Caco-2 (cell line): ENCODE measurements at regions of chr17 and their contacts with region 1.

Region 1: GRCh38 chr17:40362696-40363110 is 1.8 kb downstream of the GJD3 start:
- DNase-seq: peak; percentile 89 to 94
- H3K4me3 ChIP-seq: peak overlapping the region; percentile 94
- H3K4me3 Mint-ChIP-seq: peak overlapping the region; percentile 69
- H3K27ac Mint-ChIP-seq: peak overlapping the region; percentile 11
- H3K4me1 ChIP-seq: peaks cover 5% of the 10 kb centered on the region; the same call in 1 of the 2 replicates
- H3K4me1 Mint-ChIP-seq: peaks cover 6% of the 10 kb centered on the region
- H3K27me3 ChIP-seq: no peaks in the 10 kb centered on the region
- H3K27me3 Mint-ChIP-seq: no peaks in the 10 kb centered on the region
- CTCF ChIP-seq: peak; percentile 62 to 93

Region 2: GRCh38 chr17:40209404-40210093 is 153.2 kb before region 1 on chr17:
- CTCF ChIA-PET with region 1: interaction called, 4 read pairs
- POLR2A ChIA-PET with region 1: no interaction called
- intact Hi-C with region 1: loop called (anchors 10 kb)
- DNase-seq: no peak
- H3K4me3 ChIP-seq: no peak overlapping the region
- H3K4me3 Mint-ChIP-seq: no peak overlapping the region
- H3K27ac Mint-ChIP-seq: peak overlapping the region; percentile 42
- H3K4me1 ChIP-seq: peaks cover 12% of the 10 kb centered on the region
- H3K4me1 Mint-ChIP-seq: peaks cover 9% of the 10 kb centered on the region
- H3K27me3 ChIP-seq: no peaks in the 10 kb centered on the region
- H3K27me3 Mint-ChIP-seq: no peaks in the 10 kb centered on the region
- CTCF ChIP-seq: no peak

Region 3: DNA sequence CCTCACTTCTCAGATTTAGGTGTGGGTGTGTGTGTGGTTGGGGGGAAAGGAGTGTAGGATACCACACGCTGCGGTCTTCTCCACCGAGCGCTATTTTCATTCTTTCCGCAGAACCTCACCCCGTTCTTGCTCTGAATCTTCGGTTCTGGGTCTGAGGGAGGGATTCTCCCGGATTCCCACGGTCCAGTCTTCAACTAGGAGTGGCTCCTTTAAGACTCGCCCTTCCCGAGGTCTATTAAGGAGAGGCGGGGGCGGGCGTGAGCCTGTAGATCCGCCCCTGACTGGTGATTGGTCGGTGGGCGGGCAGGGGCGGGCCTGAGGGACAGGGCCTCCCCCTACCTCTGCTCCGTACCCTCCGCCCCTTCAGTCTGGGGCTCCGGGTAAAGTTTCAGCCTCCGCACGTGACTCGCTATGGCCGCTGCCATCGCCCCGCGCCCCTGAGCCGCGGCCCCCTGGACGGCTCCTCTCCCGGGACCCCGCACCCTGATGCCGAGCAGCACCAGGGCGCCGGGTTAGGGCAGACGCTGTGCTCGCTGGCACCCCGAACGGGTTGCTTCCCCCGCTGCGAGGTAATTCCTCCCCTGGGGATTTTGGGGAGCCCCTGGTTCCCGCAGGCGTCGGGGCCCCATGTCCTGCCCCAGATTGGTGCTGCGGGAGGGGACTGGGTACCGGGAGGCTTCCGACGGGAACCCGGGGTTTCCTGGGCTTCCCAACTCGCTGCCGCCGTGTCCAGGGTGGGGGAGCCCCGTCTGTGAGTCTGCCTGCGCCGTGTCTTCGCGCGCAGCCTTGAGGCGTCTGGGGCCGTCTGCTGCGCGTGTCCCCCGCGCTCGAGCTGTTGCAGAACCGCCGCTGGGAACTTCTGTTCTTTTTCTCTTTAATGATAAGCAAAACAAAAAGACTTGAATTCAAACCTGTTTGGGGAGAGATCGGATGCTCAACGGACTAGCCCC is 44.5 kb before region 1 on chr17:
- CTCF ChIA-PET with region 1: interaction called, 5 read pairs
- POLR2A ChIA-PET with region 1: no interaction called
- intact Hi-C with region 1: loop called (anchors 1 kb)
- DNase-seq: peak; percentile 96
- H3K4me3 ChIP-seq: peak overlapping the region; percentile 94
- H3K4me3 Mint-ChIP-seq: peak overlapping the region; percentile 92
- H3K27ac Mint-ChIP-seq: peak overlapping the region; percentile 83
- H3K4me1 ChIP-seq: peaks cover 19% of the 10 kb centered on the region
- H3K4me1 Mint-ChIP-seq: peaks cover 30% of the 10 kb centered on the region
- H3K27me3 ChIP-seq: no peaks in the 10 kb centered on the region
- H3K27me3 Mint-ChIP-seq: no peaks in the 10 kb centered on the region
- CTCF ChIP-seq: no peak

Region 4: DNA sequence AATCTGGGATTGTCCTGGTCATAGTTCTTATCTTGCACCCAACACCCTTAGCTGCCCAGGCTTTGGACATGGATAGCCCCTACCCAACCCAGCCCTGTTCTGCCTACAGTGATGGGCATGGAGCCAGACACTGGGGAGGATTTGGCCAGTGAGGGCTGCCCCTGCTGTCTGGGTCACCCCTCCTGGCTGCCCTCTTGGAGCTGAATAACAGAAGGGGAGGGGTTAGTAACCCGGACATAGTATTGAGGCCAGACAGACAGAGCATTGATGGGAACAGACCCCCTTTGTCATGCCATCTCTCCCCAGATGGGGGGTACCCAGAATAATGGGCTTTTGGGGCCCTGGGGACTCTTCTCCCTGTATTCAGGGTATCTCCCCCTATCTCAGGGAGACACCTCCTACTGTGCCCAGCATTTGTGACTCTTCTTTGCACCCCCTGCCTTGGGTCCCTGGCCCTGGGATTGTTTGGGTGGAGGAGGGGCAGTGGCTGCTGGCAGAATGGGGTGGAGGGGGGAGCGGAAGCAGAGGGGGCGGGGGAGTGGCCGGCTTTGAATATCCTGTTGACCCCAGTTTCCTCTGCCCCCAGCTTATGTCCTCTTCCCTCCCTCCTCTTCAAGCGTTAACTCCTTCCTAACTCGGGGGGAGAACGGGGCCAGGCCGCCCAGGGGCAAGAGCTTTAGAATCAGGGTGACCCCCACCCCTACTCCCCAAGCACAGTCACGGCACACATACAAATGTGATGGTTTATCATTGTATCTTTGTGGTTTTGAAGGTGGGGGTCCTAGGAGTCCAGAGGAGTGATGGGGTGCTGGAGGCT is 15.2 kb before region 1 on chr17:
- CTCF ChIA-PET with region 1: interaction called, 4 read pairs
- POLR2A ChIA-PET with region 1: no interaction called
- intact Hi-C with region 1: loop called (anchors 1 kb)
- DNase-seq: no peak
- H3K4me3 ChIP-seq: no peak overlapping the region
- H3K4me3 Mint-ChIP-seq: peak overlapping the region; percentile 28
- H3K27ac Mint-ChIP-seq: peak overlapping the region; percentile 25
- H3K4me1 ChIP-seq: peaks cover 38% of the 10 kb centered on the region
- H3K4me1 Mint-ChIP-seq: peaks cover 28% of the 10 kb centered on the region
- H3K27me3 ChIP-seq: no peaks in the 10 kb centered on the region
- H3K27me3 Mint-ChIP-seq: no peaks in the 10 kb centered on the region
- CTCF ChIP-seq: no peak

Region 5: GRCh38 chr17:40417609-40418427 is 55.1 kb after region 1 on chr17 and contains the start of gene TOP2A:
- CTCF ChIA-PET with region 1: interaction called, 11 read pairs
- POLR2A ChIA-PET with region 1: interaction called, 3 read pairs
- intact Hi-C with region 1: loop called (anchors 2 kb)
- DNase-seq: peak; percentile 99 to 100
- H3K4me3 ChIP-seq: peak within 1 kb of the TSS; percentile 89
- H3K4me3 Mint-ChIP-seq: peak within 1 kb of the TSS; percentile 99
- H3K27ac Mint-ChIP-seq: peak within 1 kb of the TSS; percentile 99
- H3K4me1 ChIP-seq: peaks cover 16% of the 10 kb centered on the region; the same call in 1 of the 2 replicates
- H3K4me1 Mint-ChIP-seq: no peaks in the 10 kb centered on the region
- H3K27me3 ChIP-seq: no peaks in the 10 kb centered on the region
- H3K27me3 Mint-ChIP-seq: no peaks in the 10 kb centered on the region
- CTCF ChIP-seq: no peak
- total RNA-seq, gene TOP2A: 226 and 237 TPM in 2 replicates

Region 6: DNA sequence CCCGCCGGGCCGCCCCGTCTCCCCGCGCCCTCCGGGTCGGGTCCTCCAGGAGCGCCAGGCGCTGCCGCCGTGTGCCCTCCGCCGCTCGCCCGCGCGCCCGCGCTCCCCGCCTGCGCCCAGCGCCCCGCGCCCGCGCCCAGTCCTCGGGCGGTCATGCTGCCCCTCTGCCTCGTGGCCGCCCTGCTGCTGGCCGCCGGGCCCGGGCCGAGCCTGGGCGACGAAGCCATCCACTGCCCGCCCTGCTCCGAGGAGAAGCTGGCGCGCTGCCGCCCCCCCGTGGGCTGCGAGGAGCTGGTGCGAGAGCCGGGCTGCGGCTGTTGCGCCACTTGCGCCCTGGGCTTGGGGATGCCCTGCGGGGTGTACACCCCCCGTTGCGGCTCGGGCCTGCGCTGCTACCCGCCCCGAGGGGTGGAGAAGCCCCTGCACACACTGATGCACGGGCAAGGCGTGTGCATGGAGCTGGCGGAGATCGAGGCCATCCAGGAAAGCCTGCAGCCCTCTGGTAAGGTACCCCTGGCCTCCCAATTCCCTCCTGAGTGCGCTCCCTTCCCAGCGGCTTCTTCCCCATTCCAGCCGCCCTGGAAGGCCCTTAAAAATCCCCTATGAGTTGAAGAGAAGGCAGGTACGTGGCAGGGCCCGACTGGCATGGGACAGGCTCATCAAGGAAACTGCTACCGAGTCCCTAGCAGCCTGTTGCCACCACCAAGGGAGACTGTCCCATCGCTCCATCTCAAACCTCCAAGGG is 81.1 kb after region 1 on chr17:
- CTCF ChIA-PET with region 1: interaction called, 8 read pairs
- POLR2A ChIA-PET with region 1: no interaction called
- intact Hi-C with region 1: loop called (anchors 2 kb)
- DNase-seq: peak; percentile 81 to 89
- H3K4me3 ChIP-seq: peak overlapping the region; percentile 61
- H3K4me3 Mint-ChIP-seq: peak overlapping the region; percentile 26
- H3K27ac Mint-ChIP-seq: no peak overlapping the region
- H3K4me1 ChIP-seq: peaks cover 14% of the 10 kb centered on the region
- H3K4me1 Mint-ChIP-seq: peaks cover 20% of the 10 kb centered on the region
- H3K27me3 ChIP-seq: no peaks in the 10 kb centered on the region
- H3K27me3 Mint-ChIP-seq: no peaks in the 10 kb centered on the region
- CTCF ChIP-seq: peak; percentile 40 to 78

Region 7: GRCh38 chr17:40516581-40517285 is 154.0 kb after region 1 on chr17:
- CTCF ChIA-PET with region 1: no interaction called
- POLR2A ChIA-PET with region 1: no interaction called
- intact Hi-C with region 1: no loop called
- DNase-seq: peak; percentile 26 to 63
- H3K4me3 ChIP-seq: no peak overlapping the region
- H3K4me3 Mint-ChIP-seq: no peak overlapping the region
- H3K27ac Mint-ChIP-seq: peak overlapping the region; percentile 5
- H3K4me1 ChIP-seq: peaks cover 40% of the 10 kb centered on the region
- H3K4me1 Mint-ChIP-seq: peaks cover 15% of the 10 kb centered on the region
- H3K27me3 ChIP-seq: no peaks in the 10 kb centered on the region; the same call in 1 of the 2 replicates
- H3K27me3 Mint-ChIP-seq: no peaks in the 10 kb centered on the region
- CTCF ChIP-seq: no peak